ENCODE measurements at regions of chr17 and their contacts with region 1.

Region 1: DNA sequence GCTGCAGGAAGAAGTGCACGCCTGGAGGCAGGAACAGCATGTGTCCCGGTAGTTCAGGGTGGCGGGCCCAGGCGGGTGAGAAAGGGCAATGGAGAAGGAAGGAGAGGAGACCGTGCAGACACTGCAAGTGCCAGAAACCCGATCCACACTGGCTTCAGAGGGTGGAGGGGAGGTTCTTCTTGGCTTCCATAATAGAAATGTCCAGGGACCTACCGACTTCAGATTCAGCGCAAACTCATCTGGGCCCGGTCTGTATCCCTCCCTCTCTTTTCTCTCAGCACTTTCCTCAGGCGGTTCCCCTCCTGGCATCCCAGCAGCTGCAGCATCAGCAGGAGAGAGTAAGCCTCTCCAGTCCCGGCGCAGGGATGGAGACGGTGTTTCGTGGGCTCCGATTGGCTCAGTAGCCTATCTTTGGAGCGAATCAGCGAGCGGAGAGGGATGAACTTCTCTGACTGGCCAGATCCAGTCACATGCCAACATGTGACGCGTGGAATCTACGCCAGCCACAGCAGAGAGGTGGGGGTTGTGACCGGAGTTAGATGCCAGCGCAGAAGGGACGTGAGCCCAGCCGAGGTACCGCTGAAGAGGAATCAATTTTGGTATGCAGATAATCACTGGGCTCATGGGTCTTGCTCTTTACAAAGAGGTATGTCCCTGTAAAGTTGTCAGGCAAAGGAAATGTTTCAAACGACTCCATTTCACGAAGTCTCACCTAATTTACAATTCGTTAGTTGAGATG is 1.9 kb upstream of the PRPSAP2 start:
- DNase-seq: peak; percentile 86
- H3K4me3 Mint-ChIP-seq: peak overlapping the region; percentile 87
- H3K27ac Mint-ChIP-seq: peak overlapping the region; percentile 80
- H3K4me1 Mint-ChIP-seq: peaks cover 43% of the 10 kb centered on the region
- H3K27me3 Mint-ChIP-seq: peaks cover 3% of the 10 kb centered on the region

Region 2: DNA sequence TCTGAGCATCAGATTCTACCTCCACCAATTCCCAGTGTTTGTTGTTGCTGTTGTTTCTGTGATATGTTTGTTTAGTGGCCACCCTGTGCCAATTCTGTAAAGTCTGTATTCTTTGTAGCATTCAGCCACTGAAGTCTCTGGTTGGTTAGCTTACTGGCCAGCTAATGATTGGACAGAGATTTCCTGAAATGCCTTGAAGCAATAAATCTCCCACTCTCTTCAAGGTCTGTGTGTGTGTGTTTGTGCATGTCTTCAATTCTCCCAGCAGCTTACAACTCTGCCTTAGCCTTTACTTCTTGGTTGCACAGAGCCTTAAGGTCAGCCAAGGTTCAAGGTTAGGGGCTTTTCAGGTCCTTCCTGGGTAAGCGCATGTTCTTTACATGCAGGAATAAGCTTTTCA is 40.1 kb after region 1 on chr17:
- intact Hi-C with region 1: loop called (anchors 1 kb)
- DNase-seq: no peak
- H3K4me3 Mint-ChIP-seq: no peak overlapping the region
- H3K27ac Mint-ChIP-seq: no peak overlapping the region
- H3K4me1 Mint-ChIP-seq: peaks cover 12% of the 10 kb centered on the region
- H3K27me3 Mint-ChIP-seq: no peaks in the 10 kb centered on the region

Region 3: DNA sequence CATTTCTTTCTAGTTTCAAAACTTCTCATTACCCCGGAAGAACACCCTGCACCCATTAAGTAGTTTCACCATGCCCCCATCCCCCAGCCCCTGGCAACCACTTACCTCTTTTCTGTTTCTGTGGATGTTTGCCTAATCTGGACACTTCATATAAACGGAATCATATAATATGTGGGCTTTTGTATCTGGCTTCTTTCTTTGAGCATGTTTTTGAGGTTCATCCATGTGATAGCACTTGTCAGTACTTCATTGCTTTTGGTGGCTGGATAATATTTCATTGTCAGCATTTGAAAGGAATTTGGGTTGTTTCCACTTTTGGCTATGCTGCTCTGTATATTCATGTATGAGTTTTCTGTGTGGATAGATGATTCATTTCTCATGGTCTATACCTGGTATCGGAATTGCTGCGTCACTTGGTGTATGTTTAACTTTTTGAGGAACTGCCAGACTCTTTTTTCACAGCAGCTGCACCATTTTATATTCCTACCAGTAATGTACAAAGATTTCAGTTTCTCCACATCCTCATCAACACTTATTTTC is 66.0 kb after region 1 on chr17:
- intact Hi-C with region 1: loop called (anchors 1 kb)
- DNase-seq: no peak
- H3K4me3 Mint-ChIP-seq: peak overlapping the region; percentile 75
- H3K27ac Mint-ChIP-seq: peak overlapping the region; percentile 97
- H3K4me1 Mint-ChIP-seq: peaks cover 52% of the 10 kb centered on the region
- H3K27me3 Mint-ChIP-seq: no peaks in the 10 kb centered on the region

Region 4: GRCh38 chr17:19004421-19005136 is 148.6 kb after region 1 on chr17 and contains the start of gene FAM83G:
- intact Hi-C with region 1: loop called (anchors 1 kb)
- DNase-seq: peak; percentile 76
- H3K4me3 Mint-ChIP-seq: peak within 1 kb of the TSS; percentile 91
- H3K27ac Mint-ChIP-seq: peak within 1 kb of the TSS; percentile 84
- H3K4me1 Mint-ChIP-seq: peaks cover 22% of the 10 kb centered on the region
- H3K27me3 Mint-ChIP-seq: peaks cover 9% of the 10 kb centered on the region
- total RNA-seq, gene FAM83G: 13.0 and 13.2 TPM in 2 replicates